GM10248 (cell line): ENCODE measurements at regions of chr21 and their contacts with region 1.

Region 1: DNA sequence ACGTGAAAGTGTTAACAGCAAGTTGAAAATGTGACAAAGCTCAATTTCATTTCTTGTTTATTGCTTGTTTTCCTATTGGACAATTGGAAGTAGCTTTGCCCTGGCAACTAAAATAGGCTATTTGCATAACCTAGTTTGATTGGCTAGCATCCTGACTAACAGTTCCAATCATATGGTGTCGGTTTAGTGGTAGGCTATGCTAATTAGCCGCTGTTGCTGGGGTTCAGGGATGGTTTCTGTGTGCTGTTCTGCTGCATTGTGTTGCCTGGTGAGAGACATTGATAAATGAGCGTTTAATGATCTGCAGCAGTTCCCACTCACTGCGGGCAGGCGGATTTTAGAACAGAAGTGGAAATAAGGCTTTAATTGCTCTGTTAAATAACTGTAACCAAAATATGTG is 68.5 kb downstream of the DYRK1A start:
- DNase-seq: no peak
- CTCF ChIP-seq: no peak

Region 2: GRCh38 chr21:37407719-37408420 is 27.2 kb before region 1 on chr21:
- CTCF ChIA-PET with region 1: interaction called, 10 read pairs
- POLR2A ChIA-PET with region 1: no interaction called
- DNase-seq: peak; percentile 17
- CTCF ChIP-seq: no peak

Region 3: GRCh38 chr21:37724201-37724600 is 289.1 kb after region 1 on chr21:
- CTCF ChIA-PET with region 1: no interaction called
- POLR2A ChIA-PET with region 1: no interaction called
- DNase-seq: no peak
- CTCF ChIP-seq: no peak

Region 4: GRCh38 chr21:38478782-38479181 is 1043.7 kb after region 1 on chr21:
- CTCF ChIA-PET with region 1: no interaction called
- POLR2A ChIA-PET with region 1: no interaction called
- DNase-seq: no peak
- CTCF ChIP-seq: no peak